HepG2 (cell line): ENCODE measurements at regions of chr5 and their contacts with region 1.

Region 1: GRCh38 chr5:145887976-145888574 is 15.3 kb upstream of the GRXCR2 start:
- DNase-seq: peak; percentile 56
- ATAC-seq: peak; percentile 97
- H3K4me3 ChIP-seq: no peak overlapping the region
- H3K27ac ChIP-seq: no peak overlapping the region
- H3K4me1 ChIP-seq: no peaks in the 10 kb centered on the region
- H3K27me3 ChIP-seq: peaks cover 0 to 1% of the 10 kb centered on the region in 2 experiments; a peak in 1 of 5 replicates
- CTCF ChIP-seq: peak; percentile 81
- EP300 ChIP-seq: no peak
- POLR2A ChIP-seq: no peak
- RAD21 ChIP-seq: no peak

Region 2: DNA sequence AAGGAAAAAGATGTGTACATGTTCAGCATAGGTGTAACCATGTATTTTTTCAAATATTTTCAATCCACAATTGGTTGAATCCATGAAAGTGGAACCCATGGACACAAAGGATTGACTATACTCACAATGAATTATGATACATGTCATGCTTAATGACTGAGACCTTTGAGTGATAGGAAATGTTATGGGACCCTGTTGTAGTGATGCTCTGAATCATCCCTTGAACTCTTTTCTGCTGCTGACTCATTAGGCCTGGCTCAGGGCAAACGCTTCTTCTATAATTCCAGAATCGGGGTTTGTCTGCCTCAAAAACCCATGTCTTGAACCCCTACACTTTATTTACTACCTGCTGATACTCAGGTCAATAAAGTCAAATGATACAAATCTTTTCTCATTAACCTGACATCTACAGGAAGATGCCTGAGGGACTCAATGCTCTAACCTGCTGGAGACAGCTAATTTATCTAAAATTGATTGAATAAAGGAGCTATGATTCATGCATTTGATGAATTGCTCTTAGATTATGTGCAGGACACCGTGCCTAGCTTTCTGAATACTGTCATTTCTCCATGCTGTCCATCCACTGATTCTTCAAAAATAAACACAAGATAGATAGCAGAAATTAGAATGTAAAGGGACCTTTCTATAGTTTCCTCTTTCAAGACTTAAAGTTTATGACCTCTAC is 313.0 kb before region 1 on chr5:
- CTCF ChIA-PET with region 1: no interaction called
- POLR2A ChIA-PET with region 1: no interaction called
- in situ Hi-C with region 1: no loop called
- intact Hi-C with region 1: no loop called
- DNase-seq: no peak
- ATAC-seq: no peak
- H3K4me3 ChIP-seq: no peak overlapping the region
- H3K27ac ChIP-seq: no peak overlapping the region
- H3K4me1 ChIP-seq: no peaks in the 10 kb centered on the region
- H3K27me3 ChIP-seq: no peaks in the 10 kb centered on the region; a peak in 1 of 5 replicates
- CTCF ChIP-seq: no peak
- EP300 ChIP-seq: no peak
- POLR2A ChIP-seq: no peak
- RAD21 ChIP-seq: no peak

Region 3: DNA sequence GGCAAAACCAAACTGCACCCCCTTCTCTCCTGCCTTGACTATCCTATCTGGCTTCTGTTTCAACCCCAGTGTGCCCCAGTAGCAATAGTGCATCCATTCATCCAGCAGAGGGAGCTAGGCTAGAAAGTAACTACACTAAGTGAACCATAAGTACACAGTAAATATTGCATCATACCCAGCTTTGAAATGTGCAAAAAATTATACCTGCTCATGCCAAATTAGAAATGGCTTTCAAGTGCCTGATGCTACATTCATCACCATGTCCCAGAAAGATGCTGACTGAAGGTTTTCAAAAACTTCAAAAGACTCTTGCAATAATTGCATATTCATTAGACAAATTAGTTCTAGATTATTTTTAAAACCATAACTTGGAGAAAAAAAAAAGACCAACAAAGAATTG is 206.4 kb before region 1 on chr5:
- CTCF ChIA-PET with region 1: no interaction called
- POLR2A ChIA-PET with region 1: no interaction called
- in situ Hi-C with region 1: no loop called
- intact Hi-C with region 1: loop called (anchors 5 kb)
- DNase-seq: peak; percentile 83
- ATAC-seq: peak; percentile 99
- H3K4me3 ChIP-seq: no peak overlapping the region; a peak in 1 of 6 replicates
- H3K27ac ChIP-seq: no peak overlapping the region
- H3K4me1 ChIP-seq: peaks cover 19% of the 10 kb centered on the region
- H3K27me3 ChIP-seq: no peaks in the 10 kb centered on the region
- CTCF ChIP-seq: peak; percentile 88
- EP300 ChIP-seq: peak; percentile 48 to 55; a peak in 2 of 4 replicates
- POLR2A ChIP-seq: no peak
- RAD21 ChIP-seq: peak; percentile 80

Region 4: DNA sequence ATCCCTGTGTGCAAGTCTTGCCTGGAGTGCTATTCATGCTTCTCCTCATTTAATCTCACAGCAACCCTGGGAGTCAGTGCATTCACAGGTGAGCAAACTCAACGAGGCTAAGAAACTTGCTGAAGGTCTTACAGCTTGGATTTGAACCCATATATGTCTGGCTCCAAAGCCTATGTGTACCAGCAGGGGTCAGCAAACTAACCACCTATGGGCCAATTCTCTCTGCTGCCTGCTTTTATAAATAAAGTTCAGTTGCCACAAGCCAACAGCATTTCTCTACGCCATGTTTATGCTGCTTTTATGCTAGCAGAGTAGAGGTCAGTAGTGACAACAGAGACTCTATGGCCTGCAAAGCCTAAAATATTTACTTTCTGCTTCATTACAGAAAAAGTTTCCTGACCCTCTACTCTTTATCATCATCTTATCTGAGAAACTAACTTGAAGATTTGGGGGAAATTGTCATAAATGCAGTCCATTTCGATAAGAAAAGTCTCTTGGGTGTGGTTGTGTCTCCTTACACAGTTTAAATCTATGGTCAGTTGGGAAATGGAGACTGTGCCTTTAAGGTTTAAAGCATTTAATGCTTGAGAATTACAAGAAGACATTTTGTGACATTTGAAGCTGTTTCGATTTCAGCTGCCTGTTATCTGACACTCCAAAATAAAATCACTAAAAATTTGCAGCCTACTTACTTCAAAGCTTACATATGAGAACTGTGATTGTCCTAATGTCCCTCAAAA is 190.7 kb before region 1 on chr5:
- CTCF ChIA-PET with region 1: interaction called, 6 read pairs
- POLR2A ChIA-PET with region 1: no interaction called
- in situ Hi-C with region 1: no loop called
- intact Hi-C with region 1: loop called (anchors 1 kb)
- DNase-seq: peak; percentile 47
- ATAC-seq: peak; percentile 80
- H3K4me3 ChIP-seq: no peak overlapping the region
- H3K27ac ChIP-seq: no peak overlapping the region
- H3K4me1 ChIP-seq: no peaks in the 10 kb centered on the region
- H3K27me3 ChIP-seq: no peaks in the 10 kb centered on the region
- CTCF ChIP-seq: peak; percentile 63
- EP300 ChIP-seq: no peak
- POLR2A ChIP-seq: no peak
- RAD21 ChIP-seq: no peak

Region 5: GRCh38 chr5:145825751-145826180 is 62.3 kb before region 1 on chr5:
- CTCF ChIA-PET with region 1: interaction called, 3 read pairs
- POLR2A ChIA-PET with region 1: no interaction called
- in situ Hi-C with region 1: no loop called
- intact Hi-C with region 1: loop called (anchors 1 kb)
- DNase-seq: peak; percentile 61
- ATAC-seq: peak; percentile 66
- H3K4me3 ChIP-seq: no peak overlapping the region
- H3K27ac ChIP-seq: no peak overlapping the region
- H3K4me1 ChIP-seq: peaks cover 25% of the 10 kb centered on the region
- H3K27me3 ChIP-seq: no peaks in the 10 kb centered on the region
- CTCF ChIP-seq: peak; percentile 72
- EP300 ChIP-seq: no peak
- POLR2A ChIP-seq: no peak
- RAD21 ChIP-seq: peak; percentile 33; the same call in 1 of the 2 replicates

Region 6: DNA sequence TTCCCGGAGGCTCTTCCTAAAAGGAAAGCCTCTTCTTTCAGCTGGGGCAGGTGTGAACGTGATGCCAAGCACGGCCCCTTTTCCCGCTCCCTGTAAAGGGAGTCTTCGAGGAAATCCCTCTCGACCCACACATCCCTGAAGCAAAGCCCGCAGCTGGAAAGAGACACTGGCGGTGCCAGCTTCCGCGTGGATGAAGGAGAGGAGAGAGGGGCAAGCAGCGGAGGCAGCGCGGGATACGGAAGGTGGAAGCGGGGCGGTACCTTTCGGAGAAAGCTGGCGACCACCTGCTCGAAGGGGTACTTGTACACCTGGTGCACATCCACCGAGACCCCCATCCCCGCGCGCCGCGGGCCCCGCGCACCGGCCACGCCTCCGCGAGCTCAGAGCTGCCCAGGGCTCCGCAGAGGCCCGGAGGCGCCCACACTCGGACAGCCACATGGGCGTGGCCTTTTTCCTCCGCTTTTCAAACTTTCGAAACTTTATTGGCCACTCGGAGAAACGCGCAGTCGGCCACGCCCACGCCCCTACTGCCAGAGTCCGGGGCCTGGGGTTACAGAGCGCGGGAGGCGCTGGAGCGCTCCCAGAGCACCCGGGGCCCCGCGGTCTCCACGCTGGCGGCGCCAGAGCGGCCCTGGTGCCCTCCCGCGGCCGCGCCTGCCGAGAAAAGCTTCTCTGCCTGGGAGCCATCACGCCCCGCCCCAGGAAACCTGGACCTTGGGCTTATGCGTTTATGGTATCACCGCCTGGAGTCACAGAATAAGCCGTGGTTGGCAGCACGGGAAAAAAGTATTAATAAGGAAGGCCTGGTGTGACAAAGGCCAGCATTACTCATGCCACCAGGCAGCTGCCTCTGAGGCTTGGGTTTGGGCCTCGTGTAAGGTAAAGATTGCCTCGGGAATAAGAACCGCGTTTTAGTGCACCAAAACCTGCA is 52.9 kb before region 1 on chr5 and contains the start of gene PRELID2:
- CTCF ChIA-PET with region 1: no interaction called
- POLR2A ChIA-PET with region 1: interaction called, 3 read pairs
- in situ Hi-C with region 1: no loop called
- intact Hi-C with region 1: loop called (anchors 2 kb)
- DNase-seq: peak; percentile 89
- ATAC-seq: peak; percentile 98
- H3K4me3 ChIP-seq: peak within 1 kb of the TSS; percentile 72 to 77 (median 74)
- H3K27ac ChIP-seq: peak within 1 kb of the TSS; percentile 79
- H3K4me1 ChIP-seq: peaks cover 67% of the 10 kb centered on the region
- H3K27me3 ChIP-seq: no peaks in the 10 kb centered on the region; a peak in 1 of 5 replicates
- CTCF ChIP-seq: peak; percentile 65
- EP300 ChIP-seq: no peak
- POLR2A ChIP-seq: peak; percentile 74 to 89
- RAD21 ChIP-seq: peak; percentile 77
- total RNA-seq, gene PRELID2: 20.3 and 22.9 TPM in 2 replicates

Region 7: DNA sequence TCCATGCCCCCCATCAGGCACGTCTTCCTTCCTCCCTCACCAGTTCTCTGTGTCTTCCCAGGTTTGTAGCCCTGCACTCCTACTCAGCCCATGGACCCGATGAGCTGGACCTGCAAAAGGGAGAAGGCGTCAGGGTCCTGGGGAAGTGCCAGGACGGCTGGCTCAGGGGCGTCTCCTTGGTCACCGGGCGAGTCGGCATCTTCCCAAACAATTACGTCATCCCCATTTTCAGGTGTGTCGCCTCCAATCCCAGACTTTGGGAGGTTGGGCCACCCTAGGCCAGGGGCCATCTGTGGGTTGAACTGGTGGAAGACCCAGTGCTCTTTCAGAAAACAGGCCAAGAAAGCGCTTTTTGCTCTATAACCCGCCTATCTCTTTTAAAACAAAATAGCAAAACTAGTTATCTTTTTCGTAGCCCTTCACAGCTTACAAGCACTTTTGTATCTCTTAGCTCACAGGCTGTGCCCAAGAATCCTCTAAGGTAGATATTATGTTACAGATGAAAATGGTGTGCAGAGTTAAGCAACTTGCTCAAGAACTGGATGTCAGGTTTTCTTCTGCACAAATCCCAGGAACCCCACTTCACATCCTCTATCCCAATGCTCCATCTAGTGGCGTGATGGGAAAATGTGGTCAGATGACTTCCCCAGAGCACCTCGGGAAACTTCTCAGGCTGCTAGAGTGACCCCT is 161.1 kb after region 1 on chr5:
- CTCF ChIA-PET with region 1: no interaction called
- POLR2A ChIA-PET with region 1: no interaction called
- in situ Hi-C with region 1: no loop called
- intact Hi-C with region 1: loop called (anchors 1 kb)
- DNase-seq: peak; percentile 66
- ATAC-seq: peak; percentile 92
- H3K4me3 ChIP-seq: no peak overlapping the region
- H3K27ac ChIP-seq: no peak overlapping the region
- H3K4me1 ChIP-seq: no peaks in the 10 kb centered on the region
- H3K27me3 ChIP-seq: no peaks in the 10 kb centered on the region
- CTCF ChIP-seq: peak; percentile 83
- EP300 ChIP-seq: no peak
- POLR2A ChIP-seq: no peak
- RAD21 ChIP-seq: peak; percentile 84

Region 8: GRCh38 chr5:146188358-146188757 is 300.3 kb after region 1 on chr5:
- CTCF ChIA-PET with region 1: no interaction called
- POLR2A ChIA-PET with region 1: no interaction called
- in situ Hi-C with region 1: no loop called
- intact Hi-C with region 1: no loop called
- DNase-seq: no peak
- ATAC-seq: no peak
- H3K4me3 ChIP-seq: no peak overlapping the region
- H3K27ac ChIP-seq: no peak overlapping the region
- H3K4me1 ChIP-seq: peaks cover 29% of the 10 kb centered on the region
- H3K27me3 ChIP-seq: no peaks in the 10 kb centered on the region
- CTCF ChIP-seq: no peak
- EP300 ChIP-seq: no peak
- POLR2A ChIP-seq: no peak
- RAD21 ChIP-seq: no peak